ENCODE measurements at regions of chr15 and their contacts with region 1.

Region 1: DNA sequence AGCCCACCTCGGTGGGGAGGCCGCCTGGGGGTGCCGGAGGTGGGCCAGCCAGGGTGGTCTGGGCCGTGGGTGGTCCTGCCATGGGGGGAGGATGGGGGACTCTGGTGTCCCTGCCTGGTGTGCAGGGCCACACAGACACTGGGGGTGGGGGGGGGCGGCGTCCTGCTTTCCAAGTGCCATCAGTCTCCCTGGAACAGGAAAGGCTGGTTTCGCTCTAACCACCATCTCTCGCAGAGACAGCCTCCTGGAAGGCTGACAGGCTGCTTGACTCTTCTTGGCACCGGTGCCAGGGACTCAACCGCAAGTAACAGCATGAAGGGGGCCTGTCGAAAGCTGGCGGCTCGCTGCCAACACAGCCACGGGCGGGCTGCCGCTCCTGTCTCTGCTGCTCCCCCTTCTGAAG is 40.3 kb downstream of the RGMA start:
- DNase-seq: peak; percentile 93
- H3K4me3 ChIP-seq: no peak overlapping the region
- H3K27ac ChIP-seq: peak overlapping the region; percentile 41 to 76 (median 52)
- H3K4me1 ChIP-seq: peaks cover 0 to 81% (median 46%) of the 10 kb centered on the region in 4 donors
- H3K27me3 ChIP-seq: no peaks in the 10 kb centered on the region
- CTCF ChIP-seq: no peak
- EP300 ChIP-seq: no peak
- POLR2A ChIP-seq: no peak

Region 2: DNA sequence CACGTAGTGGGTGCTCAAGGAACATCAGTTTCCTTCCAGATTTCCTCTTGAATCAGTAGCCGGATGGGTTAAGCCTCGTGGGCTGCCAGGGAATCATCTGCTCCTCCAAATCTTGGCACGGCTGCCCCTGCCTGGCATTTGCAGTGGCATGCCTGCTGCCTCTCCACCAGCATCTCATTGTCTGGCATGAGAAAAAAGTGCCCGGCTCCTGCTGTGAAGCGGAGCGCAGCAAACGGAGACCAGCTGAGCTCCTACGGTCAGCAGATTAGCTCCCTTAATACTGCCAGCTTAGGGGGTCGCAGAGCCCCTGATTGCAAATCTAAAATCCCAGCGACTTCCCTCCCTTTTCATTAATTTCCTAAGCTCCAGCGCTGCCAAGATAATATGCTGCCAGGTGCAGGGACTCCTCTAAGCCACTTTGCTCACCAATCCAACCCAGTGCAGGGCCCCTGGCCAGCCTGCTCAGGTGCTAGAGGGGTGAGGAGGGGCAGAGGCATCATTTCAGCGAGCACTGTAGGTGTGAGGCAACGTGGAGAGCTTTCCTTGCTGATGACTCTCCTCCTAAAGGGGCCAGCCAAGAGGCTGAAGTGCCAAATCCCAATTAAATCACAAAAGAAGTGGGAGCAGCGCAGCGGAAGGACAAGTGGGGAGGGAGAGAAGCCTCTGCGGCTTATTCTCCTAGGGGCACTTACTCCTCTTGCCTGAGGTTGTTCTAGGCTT is 704.7 kb before region 1 on chr15:
- intact Hi-C with region 1: no loop called
- DNase-seq: no peak
- H3K4me3 ChIP-seq: no peak overlapping the region
- H3K27ac ChIP-seq: no peak overlapping the region
- H3K4me1 ChIP-seq: peaks cover 0 to 6% (median 2%) of the 10 kb centered on the region in 4 donors
- H3K27me3 ChIP-seq: peaks cover 0 to 3% (median 0%) of the 10 kb centered on the region in 3 donors
- CTCF ChIP-seq: no peak
- EP300 ChIP-seq: no peak
- POLR2A ChIP-seq: no peak

Region 3: GRCh38 chr15:93074599-93074998 is 25.8 kb after region 1 on chr15:
- intact Hi-C with region 1: no loop called
- DNase-seq: no peak
- H3K4me3 ChIP-seq: no peak overlapping the region
- H3K27ac ChIP-seq: peak overlapping the region; percentile 96 to 98 (median 97)
- H3K4me1 ChIP-seq: peaks cover 0 to 77% (median 54%) of the 10 kb centered on the region in 4 donors
- H3K27me3 ChIP-seq: no peaks in the 10 kb centered on the region
- CTCF ChIP-seq: no peak
- EP300 ChIP-seq: no peak
- POLR2A ChIP-seq: no peak

Region 4: DNA sequence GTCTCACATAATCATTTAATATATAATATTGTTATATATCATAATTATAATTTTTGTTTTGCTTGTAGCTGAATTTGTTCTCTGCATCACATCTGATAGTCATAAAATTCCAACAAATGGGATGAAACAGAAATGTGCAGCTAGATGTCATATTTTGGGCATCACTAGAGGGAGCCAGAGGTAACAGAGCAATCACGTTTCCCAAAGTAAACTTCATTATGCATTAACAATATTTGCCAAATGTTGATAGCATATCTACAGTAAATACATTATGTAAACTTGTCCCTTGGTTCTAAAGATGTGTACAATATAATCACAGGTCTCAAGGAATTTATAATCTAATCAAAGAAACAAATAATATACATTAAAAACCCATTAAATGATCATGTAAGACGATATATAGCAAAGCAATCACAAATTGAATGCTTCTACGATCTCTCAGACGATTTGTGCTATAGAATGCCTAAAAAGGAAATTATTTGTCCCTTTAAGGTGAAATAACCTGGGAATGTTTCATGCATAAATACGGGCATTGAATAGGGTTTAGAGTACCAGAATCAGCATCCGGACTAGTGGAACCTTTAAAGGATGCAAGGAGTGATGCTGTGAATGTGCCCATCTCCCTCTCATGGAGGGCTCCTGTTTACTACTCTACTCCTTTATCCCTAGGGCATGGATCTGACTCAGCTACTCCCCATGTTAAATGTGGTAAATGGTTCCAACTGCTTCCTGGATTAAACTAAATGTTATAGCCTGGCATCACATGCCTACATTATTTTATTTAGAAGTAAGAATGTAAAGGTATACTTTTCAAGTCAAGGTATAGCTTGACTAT is 948.5 kb after region 1 on chr15:
- intact Hi-C with region 1: no loop called
- DNase-seq: no peak
- H3K4me3 ChIP-seq: no peak overlapping the region
- H3K27ac ChIP-seq: no peak overlapping the region
- H3K4me1 ChIP-seq: peaks cover 0 to 41% (median 17%) of the 10 kb centered on the region in 4 donors
- H3K27me3 ChIP-seq: no peaks in the 10 kb centered on the region
- CTCF ChIP-seq: peak; percentile 64 to 78 (median 66)
- EP300 ChIP-seq: no peak
- POLR2A ChIP-seq: no peak

Region 5: DNA sequence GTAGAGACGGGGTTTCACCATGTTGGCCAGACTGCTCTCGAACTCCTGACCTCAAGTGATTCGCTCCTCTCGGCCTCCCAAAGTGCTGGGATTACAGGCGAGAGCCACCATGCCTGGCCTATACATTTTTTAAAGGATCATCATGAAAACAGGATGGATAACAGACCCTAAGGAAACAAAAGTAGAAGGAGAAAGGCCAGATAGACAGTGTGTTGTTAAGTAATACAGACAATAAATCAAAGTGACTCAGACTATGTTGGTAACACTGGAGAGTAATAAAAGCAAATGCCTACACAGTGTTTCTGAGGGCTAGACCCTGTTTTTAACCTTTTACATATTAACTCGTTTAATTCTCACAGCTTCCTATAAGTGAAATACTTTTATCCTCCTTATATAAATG is 1048.8 kb after region 1 on chr15:
- intact Hi-C with region 1: loop called (anchors 10 kb)
- DNase-seq: no peak
- H3K4me3 ChIP-seq: no peak overlapping the region
- H3K27ac ChIP-seq: peak overlapping the region in 3 of 4 donors; percentile 64 to 87 (median 79)
- H3K4me1 ChIP-seq: peaks cover 0 to 59% (median 47%) of the 10 kb centered on the region in 4 donors
- H3K27me3 ChIP-seq: no peaks in the 10 kb centered on the region
- CTCF ChIP-seq: no peak
- EP300 ChIP-seq: no peak
- POLR2A ChIP-seq: no peak

Measured in sigmoid colon (tissue), 7 donors.